ENCODE measurements at regions of chr15 and their contacts with region 1.

Region 1: DNA sequence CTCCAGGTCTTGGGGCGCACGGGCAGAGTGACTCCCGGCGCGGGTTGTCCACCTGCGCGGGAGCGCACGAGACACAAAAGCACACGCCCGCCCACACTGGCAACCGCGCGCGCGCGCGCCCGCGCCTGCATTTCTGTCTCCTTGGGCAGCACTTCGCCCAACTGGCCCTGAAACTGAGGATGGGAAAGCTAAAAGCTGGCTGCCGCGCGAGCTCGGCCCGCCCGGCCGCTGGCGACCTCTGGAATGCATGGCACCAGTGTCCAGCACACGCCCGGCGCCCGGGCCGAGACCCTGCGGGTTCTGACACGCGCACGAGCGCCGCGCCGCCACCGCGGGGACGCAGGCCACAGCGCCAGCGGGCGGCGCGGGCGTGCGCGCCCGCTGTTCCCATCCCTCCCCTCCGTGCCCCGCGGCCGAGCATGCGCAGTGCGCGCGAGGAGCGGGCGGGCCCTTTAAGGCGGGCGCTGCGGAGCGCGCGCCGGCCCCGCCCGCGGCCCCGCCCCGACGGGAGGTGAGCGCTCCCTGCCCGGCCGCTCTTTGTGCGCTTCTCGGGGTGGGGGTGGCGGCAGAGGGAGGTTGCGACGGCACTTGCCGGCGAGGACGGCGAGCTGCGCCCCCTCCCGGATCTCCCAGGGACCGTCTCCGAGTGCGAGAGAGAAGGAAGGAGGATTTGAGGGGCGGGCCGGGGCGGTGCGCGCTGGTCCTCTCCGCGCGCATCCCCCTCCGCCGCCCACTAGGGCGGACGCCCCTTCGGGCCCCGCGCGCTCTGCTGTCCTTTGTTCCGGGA is 1.0 kb upstream of the MEX3B start:
- DNase-seq: peak; percentile 92
- H3K4me3 ChIP-seq: peak overlapping the region; percentile 91
- H3K27ac ChIP-seq: peak overlapping the region; percentile 85
- H3K4me1 ChIP-seq: peaks cover 8% of the 10 kb centered on the region
- CTCF ChIP-seq: peak; percentile 72

Region 2: GRCh38 chr15:81265944-81266775 is 780.7 kb before region 1 on chr15:
- CTCF ChIA-PET with region 1: no interaction called
- POLR2A ChIA-PET with region 1: no interaction called
- intact Hi-C with region 1: loop called (anchors 5 kb)
- DNase-seq: peak; percentile 89
- H3K4me3 ChIP-seq: peak overlapping the region; percentile 27
- H3K27ac ChIP-seq: peak overlapping the region; percentile 37
- H3K4me1 ChIP-seq: peaks cover 21% of the 10 kb centered on the region
- CTCF ChIP-seq: peak; percentile 89

Region 3: DNA sequence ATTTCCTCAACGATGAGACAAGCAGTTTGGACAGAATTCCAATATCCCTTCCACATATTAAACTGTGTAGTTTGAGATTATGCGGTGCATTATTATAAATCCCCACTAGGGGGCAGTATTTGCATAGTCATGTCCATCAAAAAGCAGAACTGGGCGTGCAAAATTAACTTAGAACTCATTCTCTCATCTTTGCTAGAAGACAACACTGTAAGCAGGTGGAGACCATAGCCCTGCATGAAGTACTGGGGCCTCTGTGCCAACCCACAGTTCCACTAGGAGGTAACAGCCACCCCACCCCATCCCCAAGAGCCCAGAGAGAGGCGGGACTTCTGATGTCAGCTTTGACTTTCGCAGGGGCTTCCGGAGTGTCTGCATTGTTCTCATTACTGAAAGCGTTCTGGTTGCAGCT is 566.2 kb before region 1 on chr15:
- CTCF ChIA-PET with region 1: interaction called, 3 read pairs
- POLR2A ChIA-PET with region 1: no interaction called
- intact Hi-C with region 1: loop called (anchors 2 kb)
- DNase-seq: peak; percentile 70
- H3K4me3 ChIP-seq: no peak overlapping the region
- H3K27ac ChIP-seq: no peak overlapping the region
- H3K4me1 ChIP-seq: no peaks in the 10 kb centered on the region
- CTCF ChIP-seq: peak; percentile 98

Region 4: GRCh38 chr15:81575436-81576123 is 471.3 kb before region 1 on chr15:
- CTCF ChIA-PET with region 1: no interaction called
- POLR2A ChIA-PET with region 1: no interaction called
- intact Hi-C with region 1: no loop called
- DNase-seq: no peak
- H3K4me3 ChIP-seq: no peak overlapping the region
- H3K27ac ChIP-seq: no peak overlapping the region
- H3K4me1 ChIP-seq: no peaks in the 10 kb centered on the region
- CTCF ChIP-seq: no peak

Region 5: GRCh38 chr15:81863162-81863561 is 183.7 kb before region 1 on chr15:
- CTCF ChIA-PET with region 1: no interaction called
- POLR2A ChIA-PET with region 1: no interaction called
- intact Hi-C with region 1: loop called (anchors 5 kb)
- DNase-seq: no peak
- H3K4me3 ChIP-seq: no peak overlapping the region
- H3K27ac ChIP-seq: peak overlapping the region; percentile 30
- H3K4me1 ChIP-seq: peaks cover 92% of the 10 kb centered on the region
- CTCF ChIP-seq: no peak

Region 6: GRCh38 chr15:82030176-82030687 is 16.6 kb before region 1 on chr15:
- CTCF ChIA-PET with region 1: no interaction called
- POLR2A ChIA-PET with region 1: interaction called, 16 read pairs
- intact Hi-C with region 1: no loop called
- DNase-seq: no peak
- H3K4me3 ChIP-seq: no peak overlapping the region
- H3K27ac ChIP-seq: no peak overlapping the region
- H3K4me1 ChIP-seq: no peaks in the 10 kb centered on the region
- CTCF ChIP-seq: no peak

Region 7: GRCh38 chr15:82108489-82109078 is 61.7 kb after region 1 on chr15:
- CTCF ChIA-PET with region 1: no interaction called
- POLR2A ChIA-PET with region 1: no interaction called
- intact Hi-C with region 1: no loop called
- DNase-seq: peak; percentile 36
- H3K4me3 ChIP-seq: no peak overlapping the region
- H3K27ac ChIP-seq: no peak overlapping the region
- H3K4me1 ChIP-seq: no peaks in the 10 kb centered on the region
- CTCF ChIP-seq: peak; percentile 82

Measured in OCI-LY7 (cell line).